ENCODE measurements at regions of chr10 and their contacts with region 1.

Region 1: GRCh38 chr10:133309111-133309719 is 501 bp downstream of the ZNF511 start:
- DNase-seq: peak; percentile 98

Region 2: DNA sequence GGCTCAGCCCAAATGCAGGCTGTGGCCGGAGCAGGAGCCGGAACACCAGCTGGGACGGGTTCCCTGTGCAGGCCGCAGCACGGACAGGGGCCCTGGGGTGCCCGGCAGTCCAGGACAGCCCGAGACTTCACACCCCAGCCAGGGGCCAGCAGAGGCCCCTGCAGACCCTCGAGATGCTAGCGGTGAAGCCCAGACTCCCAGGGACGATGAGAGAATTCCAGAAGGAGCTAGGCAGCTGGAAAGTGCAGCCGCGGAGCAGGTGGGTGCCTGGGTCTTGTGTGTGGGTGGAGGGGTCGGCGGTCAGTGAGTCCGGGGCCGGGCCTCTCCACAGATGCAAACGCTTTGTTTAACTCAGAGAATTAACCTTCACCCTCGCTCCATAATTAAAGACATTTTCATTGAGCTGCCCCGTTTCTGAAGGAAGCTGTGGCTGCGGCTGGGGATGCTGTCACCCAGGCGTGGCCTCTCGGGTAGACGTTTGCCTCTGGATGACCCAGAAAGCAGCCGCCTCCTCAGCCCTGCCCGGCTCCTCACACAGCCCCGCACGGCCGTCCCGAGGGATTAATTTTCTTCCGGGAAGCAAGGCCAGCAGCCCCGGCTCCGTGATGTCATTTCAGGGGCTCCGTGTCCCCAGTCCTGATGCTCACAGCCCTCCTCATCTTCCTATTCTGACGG is 122.7 kb before region 1 on chr10:
- intact Hi-C with region 1: no loop called
- DNase-seq: no peak

Region 3: DNA sequence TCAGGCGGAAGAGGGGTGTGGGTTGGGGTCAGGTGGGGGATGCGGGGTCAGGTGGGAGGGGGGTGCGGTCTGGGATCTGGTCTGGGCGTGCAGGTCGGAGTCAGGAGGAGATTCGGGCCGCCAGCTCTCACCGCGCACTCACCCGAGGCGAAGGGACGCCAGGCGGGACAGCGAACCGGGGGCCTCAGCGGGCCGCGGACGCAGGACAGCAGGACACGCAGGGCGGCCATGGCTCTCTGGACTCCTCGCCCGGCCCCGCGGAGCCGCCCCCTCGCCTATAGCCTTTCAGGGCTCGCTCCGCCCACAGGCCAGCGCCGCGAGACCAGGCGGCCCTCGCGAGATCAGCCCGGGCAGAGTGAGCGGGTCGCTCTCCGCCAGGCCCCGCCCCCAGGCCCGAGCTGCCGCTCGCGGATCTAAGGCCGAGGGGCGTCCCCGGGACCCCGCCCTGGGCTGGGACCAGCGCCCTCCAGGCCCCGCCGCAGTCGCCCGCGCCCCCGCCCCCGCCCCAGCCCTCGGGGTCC is 63.9 kb after region 1 on chr10 and contains the start of gene ECHS1:
- intact Hi-C with region 1: loop called (anchors 5 kb)
- DNase-seq: peak; percentile 98
- total RNA-seq, gene ECHS1: 152 TPM